WTC11 (cell line): ENCODE measurements at regions of chr9 and their contacts with region 1.

Region 1: GRCh38 chr9:35790385-35791296 is 750 bp upstream of the NPR2 start:
- DNase-seq: peak; percentile 69
- ATAC-seq: peak; percentile 84
- H3K4me3 Mint-ChIP-seq: peak overlapping the region; percentile 90
- H3K27ac Mint-ChIP-seq: no peak overlapping the region; the same call in 1 of the 2 replicates
- H3K4me1 Mint-ChIP-seq: peaks cover 11% of the 10 kb centered on the region
- H3K27me3 Mint-ChIP-seq: peaks cover 3% of the 10 kb centered on the region; the same call in 1 of the 2 replicates
- CTCF ChIP-seq: peak; percentile 67

Region 2: DNA sequence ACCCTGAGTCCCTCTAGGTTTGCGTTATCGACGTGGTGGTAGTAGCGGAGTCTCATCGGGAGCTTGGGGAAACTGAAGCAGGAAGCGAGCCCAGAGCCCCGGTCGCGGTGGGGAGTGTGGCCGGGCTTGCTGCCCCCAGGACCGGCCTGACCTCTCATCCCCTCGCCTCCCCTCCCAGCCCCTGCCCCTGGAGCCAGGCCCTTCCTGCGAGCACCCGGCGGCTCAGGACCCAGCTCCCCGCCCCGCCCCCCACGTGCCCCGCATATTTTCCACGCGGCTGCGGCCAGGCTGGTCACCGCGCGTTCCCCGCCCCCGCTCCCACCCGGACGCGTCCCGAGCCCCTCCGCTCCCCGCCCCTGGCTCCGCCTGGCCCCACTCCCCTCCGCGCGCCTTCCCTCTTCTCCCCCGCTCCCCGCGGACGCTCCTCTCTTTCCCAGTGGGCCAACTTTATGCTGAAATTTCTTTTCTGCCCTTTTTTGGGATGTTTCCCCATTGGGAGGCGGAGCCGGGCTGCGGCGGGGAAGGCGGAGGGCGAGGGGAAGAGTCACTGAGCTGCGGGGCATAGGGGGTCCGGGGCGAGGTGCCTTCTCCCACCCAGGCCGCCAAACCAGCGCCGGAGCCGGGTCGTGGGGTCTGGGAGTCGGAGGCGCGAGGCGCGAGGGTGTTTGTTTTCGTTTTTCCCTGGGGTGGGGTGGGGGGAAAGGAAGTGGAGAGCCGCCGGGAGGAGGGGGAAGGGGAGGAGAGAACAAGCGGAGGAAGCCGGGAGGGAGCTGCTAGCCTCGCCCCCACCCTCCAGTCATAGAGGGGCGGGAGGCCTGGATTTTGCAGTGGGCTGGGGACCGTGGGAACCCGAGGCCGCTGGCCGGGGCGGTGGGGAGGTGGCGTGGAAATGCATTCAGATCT is 100.0 kb before region 1 on chr9:
- CTCF ChIA-PET with region 1: interaction called, 11 read pairs
- POLR2A ChIA-PET with region 1: no interaction called
- DNase-seq: peak; percentile 64
- ATAC-seq: peak; percentile 40
- H3K4me3 Mint-ChIP-seq: peak overlapping the region; percentile 91
- H3K27ac Mint-ChIP-seq: no peak overlapping the region
- H3K4me1 Mint-ChIP-seq: peaks cover 23% of the 10 kb centered on the region
- H3K27me3 Mint-ChIP-seq: no peaks in the 10 kb centered on the region
- CTCF ChIP-seq: no peak

Region 3: GRCh38 chr9:35748858-35749514 is 41.7 kb before region 1 on chr9 and contains the starts of genes GBA2 and RGP1:
- CTCF ChIA-PET with region 1: interaction called, 18 read pairs
- POLR2A ChIA-PET with region 1: no interaction called
- DNase-seq: peak; percentile 83
- ATAC-seq: peak; percentile 84
- H3K4me3 Mint-ChIP-seq: peak within 1 kb of the TSS; percentile 92
- H3K27ac Mint-ChIP-seq: peak within 1 kb of the TSS; percentile 74
- H3K4me1 Mint-ChIP-seq: peaks cover 27% of the 10 kb centered on the region
- H3K27me3 Mint-ChIP-seq: no peaks in the 10 kb centered on the region
- CTCF ChIP-seq: no peak
- total RNA-seq, gene GBA2: 85.5 to 104 TPM (median 89.7 TPM) in 3 replicates
- total RNA-seq, gene RGP1: 29.7 to 30.0 TPM (median 30.0 TPM) in 3 replicates

Region 4: GRCh38 chr9:35829084-35829763 is 38.6 kb after region 1 on chr9 and contains the start of gene TMEM8B:
- CTCF ChIA-PET with region 1: interaction called, 79 read pairs
- POLR2A ChIA-PET with region 1: interaction called, 5 read pairs
- DNase-seq: peak; percentile 97
- ATAC-seq: peak; percentile 91
- H3K4me3 Mint-ChIP-seq: peak within 1 kb of the TSS; percentile 75
- H3K27ac Mint-ChIP-seq: peak within 1 kb of the TSS; percentile 77
- H3K4me1 Mint-ChIP-seq: peaks cover 21% of the 10 kb centered on the region
- H3K27me3 Mint-ChIP-seq: peaks cover 2% of the 10 kb centered on the region; the same call in 1 of the 2 replicates
- CTCF ChIP-seq: no peak
- total RNA-seq, gene TMEM8B: 9.5 to 10.8 TPM (median 10.2 TPM) in 3 replicates

Region 5: GRCh38 chr9:35882263-35882848 is 91.7 kb after region 1 on chr9:
- CTCF ChIA-PET with region 1: interaction called, 136 read pairs
- POLR2A ChIA-PET with region 1: interaction called, 3 read pairs
- DNase-seq: peak; percentile 87
- ATAC-seq: peak; percentile 88
- H3K4me3 Mint-ChIP-seq: no peak overlapping the region
- H3K27ac Mint-ChIP-seq: no peak overlapping the region
- H3K4me1 Mint-ChIP-seq: no peaks in the 10 kb centered on the region
- H3K27me3 Mint-ChIP-seq: peaks cover 6% of the 10 kb centered on the region
- CTCF ChIP-seq: peak; percentile 87

Region 6: GRCh38 chr9:35910613-35911359 is 120.1 kb after region 1 on chr9:
- CTCF ChIA-PET with region 1: interaction called, 12 read pairs
- POLR2A ChIA-PET with region 1: no interaction called
- DNase-seq: no peak
- ATAC-seq: peak; percentile 11
- H3K4me3 Mint-ChIP-seq: no peak overlapping the region
- H3K27ac Mint-ChIP-seq: peak overlapping the region; percentile 10; the same call in 1 of the 2 replicates
- H3K4me1 Mint-ChIP-seq: peaks cover 43% of the 10 kb centered on the region
- H3K27me3 Mint-ChIP-seq: peaks cover 4% of the 10 kb centered on the region; the same call in 1 of the 2 replicates
- CTCF ChIP-seq: no peak

Region 7: GRCh38 chr9:36102742-36103495 is 312.3 kb after region 1 on chr9:
- CTCF ChIA-PET with region 1: no interaction called
- POLR2A ChIA-PET with region 1: no interaction called
- DNase-seq: peak; percentile 86
- ATAC-seq: peak; percentile 95
- H3K4me3 Mint-ChIP-seq: no peak overlapping the region
- H3K27ac Mint-ChIP-seq: peak overlapping the region; percentile 79
- H3K4me1 Mint-ChIP-seq: peaks cover 24% of the 10 kb centered on the region
- H3K27me3 Mint-ChIP-seq: no peaks in the 10 kb centered on the region
- CTCF ChIP-seq: peak; percentile 49